Activated B cell treated with CpG ODN at 0.5 μM for 24 hours (primary cell): ENCODE measurements at regions of chr4 and their contacts with region 1.

Region 1: GRCh38 chr4:48403358-48403757 is 62.0 kb downstream of the SLAIN2 start:
- DNase-seq: no peak
- ATAC-seq: no peak
- H3K4me3 Mint-ChIP-seq: no peak overlapping the region
- H3K27ac Mint-ChIP-seq: no peak overlapping the region
- H3K4me1 Mint-ChIP-seq: no peaks in the 10 kb centered on the region
- H3K27me3 Mint-ChIP-seq: no peaks in the 10 kb centered on the region
- CTCF ChIP-seq: no peak

Region 2: DNA sequence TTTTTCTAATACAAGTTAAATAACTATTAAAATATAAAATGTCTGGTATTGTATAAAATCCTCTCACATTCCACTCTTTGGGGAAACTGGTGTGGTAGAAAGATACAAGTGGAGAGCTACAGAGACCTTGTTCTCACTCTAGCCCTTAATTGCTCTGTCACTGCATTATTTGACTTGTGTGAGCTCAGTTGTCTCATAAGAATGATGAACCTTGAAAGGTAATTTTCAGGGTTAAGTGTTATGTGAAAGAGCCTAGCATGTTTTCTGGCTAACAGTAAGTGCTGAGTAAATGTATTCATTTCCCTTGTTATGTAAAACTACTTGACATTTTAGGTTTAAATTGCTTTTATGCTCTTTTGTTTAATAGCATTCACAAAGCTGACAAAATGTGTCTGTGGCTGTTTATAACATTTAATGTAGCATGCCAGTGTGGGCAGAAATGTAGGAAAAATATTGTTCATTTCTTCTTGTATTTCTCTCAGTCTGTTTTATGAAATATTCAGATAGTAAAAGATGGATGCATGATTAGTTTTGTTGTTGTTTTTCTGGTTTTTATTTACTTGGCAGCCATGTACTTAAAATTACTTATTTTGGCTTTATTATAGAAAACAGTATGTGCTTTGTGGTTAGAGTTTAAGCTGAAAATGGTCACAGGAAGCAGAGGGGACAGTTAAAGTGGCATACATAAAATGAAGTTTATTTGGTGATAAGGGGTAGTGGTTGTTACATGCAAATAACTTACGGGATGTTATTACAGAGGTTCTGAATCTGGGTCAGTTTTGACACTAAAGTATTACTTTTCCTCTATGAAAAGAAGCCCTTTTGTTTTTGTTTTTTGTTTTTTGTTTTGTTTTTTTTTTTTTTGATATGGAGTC is 32.9 kb before region 1 on chr4:
- CTCF ChIA-PET with region 1: no interaction called
- POLR2A ChIA-PET with region 1: interaction called, 12 read pairs
- intact Hi-C with region 1: no loop called
- DNase-seq: no peak
- ATAC-seq: no peak
- H3K4me3 Mint-ChIP-seq: no peak overlapping the region
- H3K27ac Mint-ChIP-seq: no peak overlapping the region
- H3K4me1 Mint-ChIP-seq: peaks cover 42% of the 10 kb centered on the region
- H3K27me3 Mint-ChIP-seq: no peaks in the 10 kb centered on the region
- CTCF ChIP-seq: no peak

Region 3: GRCh38 chr4:48526406-48526805 is 123.0 kb after region 1 on chr4:
- CTCF ChIA-PET with region 1: no interaction called
- POLR2A ChIA-PET with region 1: no interaction called
- intact Hi-C with region 1: no loop called
- DNase-seq: no peak
- ATAC-seq: no peak
- H3K4me3 Mint-ChIP-seq: no peak overlapping the region
- H3K27ac Mint-ChIP-seq: no peak overlapping the region
- H3K4me1 Mint-ChIP-seq: no peaks in the 10 kb centered on the region
- H3K27me3 Mint-ChIP-seq: no peaks in the 10 kb centered on the region
- CTCF ChIP-seq: no peak